Thyroid gland (tissue), 4 donors: ENCODE measurements at regions of chr7 and their contacts with region 1.

Region 1: GRCh38 chr7:43249823-43250145 is 137.3 kb downstream of the HECW1 start:
- DNase-seq: peak in 1 of 2 donors; percentile 4
- H3K4me3 ChIP-seq: no peak overlapping the region
- H3K27ac ChIP-seq: peak overlapping the region in 2 of 3 donors; percentile 32 to 57
- H3K4me1 ChIP-seq: peaks cover 16 to 32% of the 10 kb centered on the region in 2 donors
- H3K27me3 ChIP-seq: no peaks in the 10 kb centered on the region
- CTCF ChIP-seq: no peak
- POLR2A ChIP-seq: no peak

Region 2: GRCh38 chr7:43130347-43130746 is 119.4 kb before region 1 on chr7:
- intact Hi-C with region 1: loop called (anchors 5 kb)
- DNase-seq: no peak
- H3K4me3 ChIP-seq: no peak overlapping the region
- H3K27ac ChIP-seq: no peak overlapping the region
- H3K4me1 ChIP-seq: no peaks in the 10 kb centered on the region
- H3K27me3 ChIP-seq: no peaks in the 10 kb centered on the region
- CTCF ChIP-seq: no peak
- POLR2A ChIP-seq: no peak

Region 3: DNA sequence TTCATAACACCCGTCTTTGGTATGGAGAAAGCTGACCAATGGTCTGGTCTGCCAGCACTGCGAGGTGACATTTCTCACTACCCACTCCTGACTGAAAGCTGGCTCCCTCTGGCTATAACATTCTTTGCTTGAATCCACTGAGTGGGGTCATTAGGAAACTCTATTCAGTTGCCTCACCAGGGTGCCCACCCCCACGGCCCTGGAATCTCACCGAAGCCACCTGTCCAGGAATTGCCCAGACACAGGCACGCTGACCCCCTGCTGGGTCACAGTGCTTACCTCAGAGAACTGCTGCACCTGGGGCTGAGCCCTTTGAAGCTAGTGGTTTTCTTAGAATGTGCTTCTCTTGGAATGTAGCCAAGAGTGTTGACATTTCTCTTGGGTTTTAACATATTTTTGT is 108.7 kb before region 1 on chr7:
- intact Hi-C with region 1: no loop called
- DNase-seq: no peak
- H3K4me3 ChIP-seq: no peak overlapping the region
- H3K27ac ChIP-seq: no peak overlapping the region
- H3K4me1 ChIP-seq: peaks cover 0 to 3% of the 10 kb centered on the region in 2 donors
- H3K27me3 ChIP-seq: no peaks in the 10 kb centered on the region
- CTCF ChIP-seq: no peak
- POLR2A ChIP-seq: no peak

Region 4: GRCh38 chr7:43582503-43583423 is 333.0 kb after region 1 on chr7 and contains the start of gene STK17A:
- intact Hi-C with region 1: no loop called
- DNase-seq: peak; percentile 90 to 93
- H3K4me3 ChIP-seq: peak within 1 kb of the TSS; percentile 60 to 95 (median 91)
- H3K27ac ChIP-seq: peak within 1 kb of the TSS; percentile 78 to 93 (median 82)
- H3K4me1 ChIP-seq: peaks cover 11 to 15% of the 10 kb centered on the region in 2 donors
- H3K27me3 ChIP-seq: no peaks in the 10 kb centered on the region
- CTCF ChIP-seq: peak; percentile 94 to 100 (median 100)
- POLR2A ChIP-seq: peak; percentile 16 to 85
- total RNA-seq, gene STK17A: 7.9 to 22.9 (median 16.4) TPM